ENCODE measurements at regions of chr11 and their contacts with region 1.

Region 1: GRCh38 chr11:95150946-95151684 is 61.5 kb downstream of the ENDOD1 start:
- DNase-seq: peak; percentile 96
- H3K4me3 ChIP-seq: peak overlapping the region; percentile 39 to 59 (median 51)
- H3K27ac ChIP-seq: peak overlapping the region; percentile 66 to 86 (median 81)
- H3K4me1 ChIP-seq: peaks cover 0 to 45% (median 30%) of the 10 kb centered on the region in 4 donors
- H3K27me3 ChIP-seq: no peaks in the 10 kb centered on the region
- CTCF ChIP-seq: peak; percentile 77 to 94 (median 89)
- EP300 ChIP-seq: no peak
- POLR2A ChIP-seq: no peak

Region 2: GRCh38 chr11:94973099-94973968 is 177.8 kb before region 1 on chr11 and contains the starts of genes CWC15 and KDM4D:
- intact Hi-C with region 1: loop called (anchors 10 kb)
- DNase-seq: peak; percentile 97
- H3K4me3 ChIP-seq: peak within 1 kb of the TSS; percentile 84 to 93 (median 86)
- H3K27ac ChIP-seq: peak within 1 kb of the TSS; percentile 81 to 88 (median 82)
- H3K4me1 ChIP-seq: peaks cover 0 to 14% (median 12%) of the 10 kb centered on the region in 4 donors
- H3K27me3 ChIP-seq: no peaks in the 10 kb centered on the region
- CTCF ChIP-seq: no peak
- EP300 ChIP-seq: no peak
- POLR2A ChIP-seq: peak in 1 of 2 donors; percentile 26
- total RNA-seq, gene CWC15: 39.8 to 69.9 (median 47.3) TPM
- total RNA-seq, gene KDM4D: 0.33 to 0.55 (median 0.36) TPM in 3 of 4 donors, not detected in the other

Region 3: GRCh38 chr11:95231127-95231880 is 80.2 kb after region 1 on chr11 and contains the start of gene SESN3:
- intact Hi-C with region 1: loop called (anchors 5 kb)
- DNase-seq: peak; percentile 99
- H3K4me3 ChIP-seq: peak within 1 kb of the TSS; percentile 61 to 85 (median 72)
- H3K27ac ChIP-seq: peak within 1 kb of the TSS; percentile 75 to 88 (median 80)
- H3K4me1 ChIP-seq: peaks cover 0 to 21% (median 13%) of the 10 kb centered on the region in 4 donors
- H3K27me3 ChIP-seq: peaks cover 0 to 3% (median 0%) of the 10 kb centered on the region in 3 donors
- CTCF ChIP-seq: no peak
- EP300 ChIP-seq: no peak
- POLR2A ChIP-seq: peak; percentile 29 to 41
- total RNA-seq, gene SESN3: 8.7 to 20.8 (median 16.6) TPM

Region 4: DNA sequence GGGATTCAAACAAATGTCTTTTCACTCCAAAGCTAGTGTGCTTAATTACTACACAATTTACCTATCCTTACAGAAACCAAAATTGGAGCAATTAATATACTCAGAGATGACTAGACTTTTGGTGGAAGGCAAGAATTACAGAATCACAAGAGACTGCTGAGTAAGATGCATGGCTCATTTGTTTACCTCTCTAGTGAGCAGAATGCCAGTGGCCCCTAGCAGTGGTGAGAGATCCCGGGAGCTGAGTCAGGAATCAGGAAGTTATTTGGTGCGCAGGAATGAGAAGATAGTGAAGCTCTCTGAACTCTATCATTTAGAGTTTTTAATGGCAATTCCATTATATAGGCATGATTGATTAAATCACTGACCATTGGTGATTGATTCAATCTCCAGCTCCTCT is 268.8 kb after region 1 on chr11:
- intact Hi-C with region 1: no loop called
- DNase-seq: no peak
- H3K4me3 ChIP-seq: no peak overlapping the region
- H3K27ac ChIP-seq: no peak overlapping the region
- H3K4me1 ChIP-seq: no peaks in the 10 kb centered on the region
- H3K27me3 ChIP-seq: no peaks in the 10 kb centered on the region
- CTCF ChIP-seq: no peak
- EP300 ChIP-seq: no peak
- POLR2A ChIP-seq: no peak

Region 5: DNA sequence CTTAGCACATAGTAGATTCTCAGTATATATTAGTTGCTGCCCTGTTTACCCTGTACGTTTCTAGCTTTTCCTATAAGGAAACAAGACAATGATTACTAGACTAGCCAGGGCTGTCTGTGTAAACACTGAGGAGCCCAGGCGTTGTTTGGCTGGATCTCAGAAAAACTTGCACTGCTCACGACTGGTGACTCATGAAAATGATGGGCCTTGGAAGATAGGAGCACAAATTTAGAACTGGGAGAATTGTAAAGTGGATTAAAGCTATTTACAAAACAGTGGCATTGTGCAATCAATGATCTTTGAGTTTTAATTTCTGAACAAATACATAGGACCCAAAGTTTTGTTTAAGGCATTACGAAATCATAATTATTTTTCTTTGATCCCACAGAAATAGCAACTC is 361.6 kb after region 1 on chr11:
- intact Hi-C with region 1: loop called (anchors 5 kb)
- DNase-seq: peak; percentile 89
- H3K4me3 ChIP-seq: no peak overlapping the region
- H3K27ac ChIP-seq: peak overlapping the region; percentile 67 to 81 (median 70)
- H3K4me1 ChIP-seq: peaks cover 0 to 29% (median 27%) of the 10 kb centered on the region in 4 donors
- H3K27me3 ChIP-seq: no peaks in the 10 kb centered on the region
- CTCF ChIP-seq: no peak
- EP300 ChIP-seq: no peak
- POLR2A ChIP-seq: no peak

Region 6: GRCh38 chr11:95705485-95706124 is 554.5 kb after region 1 on chr11:
- intact Hi-C with region 1: loop called (anchors 1 kb)
- DNase-seq: peak; percentile 94
- H3K4me3 ChIP-seq: no peak overlapping the region
- H3K27ac ChIP-seq: peak overlapping the region; percentile 37 to 69 (median 48)
- H3K4me1 ChIP-seq: peaks cover 0 to 41% (median 35%) of the 10 kb centered on the region in 4 donors
- H3K27me3 ChIP-seq: no peaks in the 10 kb centered on the region
- CTCF ChIP-seq: peak; percentile 86 to 91 (median 88)
- EP300 ChIP-seq: no peak
- POLR2A ChIP-seq: no peak

Measured in sigmoid colon (tissue), 7 donors.